PC-3 (cell line): ENCODE measurements at regions of chr3 and their contacts with region 1.

Region 1: DNA sequence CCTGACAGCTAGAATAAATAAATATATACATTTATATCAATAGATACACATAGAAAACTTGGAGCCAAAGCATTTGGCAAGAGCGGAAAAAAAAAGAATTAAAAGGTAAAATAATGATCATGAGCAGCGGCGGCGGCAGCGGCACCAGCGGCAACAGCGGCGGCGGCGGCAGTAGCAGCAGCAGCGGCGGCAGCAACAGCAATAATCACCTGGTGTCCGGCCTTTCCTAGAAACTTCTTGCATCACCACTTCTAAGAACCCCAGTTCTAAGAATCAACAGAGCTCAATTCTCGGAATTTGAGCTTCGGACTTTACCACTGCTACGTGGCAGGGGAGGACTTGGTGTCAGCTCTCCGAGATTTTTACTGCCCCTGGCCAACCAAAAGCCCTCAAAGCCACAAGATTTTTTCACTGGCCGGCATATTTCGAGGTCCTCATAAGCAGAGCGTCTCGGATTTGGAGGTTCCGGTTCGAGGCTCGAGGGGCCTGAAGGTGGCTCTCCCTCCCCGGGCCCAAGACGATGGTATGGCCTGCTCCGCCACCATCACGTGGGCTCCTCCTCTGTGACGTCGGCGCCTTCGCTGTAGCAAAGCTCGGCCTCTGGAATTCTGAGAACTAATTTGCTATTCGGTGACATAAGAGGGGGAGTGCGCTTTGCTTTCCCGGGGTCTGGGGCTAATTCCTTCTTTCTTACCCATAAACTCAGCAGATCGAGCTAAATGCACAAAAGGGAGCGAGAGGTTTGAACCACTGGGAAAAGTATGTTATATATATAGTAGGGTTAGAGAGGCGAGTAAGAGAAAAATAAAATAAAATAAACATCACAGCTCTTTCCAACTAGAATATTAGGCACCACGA is at the start of gene BCL6:
- DNase-seq: peak; percentile 98
- ATAC-seq: peak; percentile 34
- H3K4me3 ChIP-seq: peak within 1 kb of the TSS; percentile 93
- H3K27ac ChIP-seq: peak within 1 kb of the TSS; percentile 91
- H3K4me1 ChIP-seq: peaks cover 43% of the 10 kb centered on the region
- H3K27me3 ChIP-seq: no peaks in the 10 kb centered on the region
- CTCF ChIP-seq: no peak
- total RNA-seq, gene BCL6: 7.7 and 11.8 TPM in 2 replicates

Region 2: GRCh38 chr3:187544296-187544695 is 201.1 kb before region 1 on chr3:
- CTCF ChIA-PET with region 1: no interaction called
- POLR2A ChIA-PET with region 1: no interaction called
- intact Hi-C with region 1: no loop called
- DNase-seq: no peak
- ATAC-seq: no peak
- H3K4me3 ChIP-seq: no peak overlapping the region
- H3K27ac ChIP-seq: no peak overlapping the region
- H3K4me1 ChIP-seq: no peaks in the 10 kb centered on the region
- H3K27me3 ChIP-seq: peaks cover 59% of the 10 kb centered on the region
- CTCF ChIP-seq: no peak

Region 3: GRCh38 chr3:187809617-187809991 is 64.2 kb after region 1 on chr3:
- CTCF ChIA-PET with region 1: interaction called, 5 read pairs
- POLR2A ChIA-PET with region 1: interaction called, 5 read pairs
- intact Hi-C with region 1: loop called (anchors 1 kb)
- DNase-seq: no peak
- ATAC-seq: no peak
- H3K4me3 ChIP-seq: peak overlapping the region; percentile 59; the same call in 1 of the 2 replicates
- H3K27ac ChIP-seq: peak overlapping the region; percentile 74
- H3K4me1 ChIP-seq: peaks cover 40% of the 10 kb centered on the region
- H3K27me3 ChIP-seq: no peaks in the 10 kb centered on the region
- CTCF ChIP-seq: no peak

Region 4: GRCh38 chr3:187913617-187914291 is 168.3 kb after region 1 on chr3:
- CTCF ChIA-PET with region 1: interaction called, 4 read pairs
- POLR2A ChIA-PET with region 1: interaction called, 8 read pairs
- intact Hi-C with region 1: loop called (anchors 1 kb)
- DNase-seq: peak; percentile 93
- ATAC-seq: peak; percentile 88
- H3K4me3 ChIP-seq: peak overlapping the region; percentile 47
- H3K27ac ChIP-seq: peak overlapping the region; percentile 91
- H3K4me1 ChIP-seq: peaks cover 48% of the 10 kb centered on the region
- H3K27me3 ChIP-seq: no peaks in the 10 kb centered on the region
- CTCF ChIP-seq: no peak

Region 5: DNA sequence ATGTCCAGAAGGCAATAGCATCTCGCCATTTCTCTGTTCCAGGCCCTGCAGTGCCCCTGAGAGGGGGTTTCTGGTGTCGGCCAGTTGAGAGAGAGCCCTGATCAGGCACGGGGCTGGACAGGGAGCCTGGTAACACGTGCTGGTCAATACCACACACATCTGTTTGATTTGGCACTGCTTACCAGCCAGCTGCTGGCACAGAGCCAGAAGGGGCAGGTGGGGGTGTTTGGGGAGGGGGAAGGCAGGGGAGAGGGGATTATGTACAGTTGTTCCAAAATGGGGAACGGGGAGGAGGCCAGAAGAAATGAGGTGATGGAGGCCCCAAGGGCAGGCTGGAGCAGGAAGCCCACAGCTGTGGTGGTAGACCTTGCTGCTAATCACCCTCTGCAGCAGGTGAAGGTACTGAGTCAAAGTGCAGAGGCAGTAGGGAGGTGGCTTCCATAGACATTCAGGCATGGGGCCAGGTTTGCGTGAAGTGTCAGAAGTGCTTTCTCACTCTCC is 255.0 kb after region 1 on chr3:
- CTCF ChIA-PET with region 1: interaction called, 6 read pairs
- POLR2A ChIA-PET with region 1: interaction called, 6 read pairs
- intact Hi-C with region 1: loop called (anchors 2 kb)
- DNase-seq: no peak
- ATAC-seq: no peak
- H3K4me3 ChIP-seq: no peak overlapping the region
- H3K27ac ChIP-seq: no peak overlapping the region
- H3K4me1 ChIP-seq: peaks cover 24% of the 10 kb centered on the region
- H3K27me3 ChIP-seq: no peaks in the 10 kb centered on the region
- CTCF ChIP-seq: no peak

Region 6: GRCh38 chr3:188154014-188154808 is 408.8 kb after region 1 on chr3 and contains the start of gene LPP:
- CTCF ChIA-PET with region 1: no interaction called
- POLR2A ChIA-PET with region 1: interaction called, 12 read pairs
- intact Hi-C with region 1: loop called (anchors 2 kb)
- DNase-seq: peak; percentile 58
- ATAC-seq: peak; percentile 82
- H3K4me3 ChIP-seq: peak within 1 kb of the TSS; percentile 97
- H3K27ac ChIP-seq: peak within 1 kb of the TSS; percentile 88
- H3K4me1 ChIP-seq: peaks cover 29% of the 10 kb centered on the region
- H3K27me3 ChIP-seq: no peaks in the 10 kb centered on the region
- CTCF ChIP-seq: 0 out of 2 replicates have a peak, but pooled peaks have one; percentile 14
- total RNA-seq, gene LPP: 20.4 and 21.3 TPM in 2 replicates

Region 7: DNA sequence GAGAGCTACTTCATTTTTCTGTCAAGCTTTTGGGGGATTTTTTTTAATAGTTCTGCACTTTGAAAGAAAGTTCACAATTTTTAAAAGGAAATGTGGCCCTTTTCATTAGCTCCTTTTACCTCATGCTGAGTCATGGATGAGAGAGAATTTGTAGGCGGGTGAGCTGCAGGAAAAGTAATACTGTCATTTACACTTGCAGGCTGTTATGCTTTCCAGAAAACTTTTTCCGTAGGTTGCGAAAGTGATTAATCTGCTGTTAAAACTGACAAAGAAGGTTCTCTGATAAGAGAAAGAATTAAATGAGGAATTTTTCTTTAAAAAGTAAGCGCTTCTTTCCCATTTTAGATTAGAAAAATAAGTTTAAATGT is 838.7 kb after region 1 on chr3:
- CTCF ChIA-PET with region 1: interaction called, 5 read pairs
- POLR2A ChIA-PET with region 1: no interaction called
- intact Hi-C with region 1: loop called (anchors 10 kb)
- DNase-seq: peak; percentile 68
- ATAC-seq: peak; percentile 64
- H3K4me3 ChIP-seq: peak overlapping the region; percentile 39
- H3K27ac ChIP-seq: peak overlapping the region; percentile 88
- H3K4me1 ChIP-seq: peaks cover 29% of the 10 kb centered on the region
- H3K27me3 ChIP-seq: no peaks in the 10 kb centered on the region
- CTCF ChIP-seq: no peak